PC-9 (cell line): ENCODE measurements at regions of chr16 and their contacts with region 1.

Region 1: DNA sequence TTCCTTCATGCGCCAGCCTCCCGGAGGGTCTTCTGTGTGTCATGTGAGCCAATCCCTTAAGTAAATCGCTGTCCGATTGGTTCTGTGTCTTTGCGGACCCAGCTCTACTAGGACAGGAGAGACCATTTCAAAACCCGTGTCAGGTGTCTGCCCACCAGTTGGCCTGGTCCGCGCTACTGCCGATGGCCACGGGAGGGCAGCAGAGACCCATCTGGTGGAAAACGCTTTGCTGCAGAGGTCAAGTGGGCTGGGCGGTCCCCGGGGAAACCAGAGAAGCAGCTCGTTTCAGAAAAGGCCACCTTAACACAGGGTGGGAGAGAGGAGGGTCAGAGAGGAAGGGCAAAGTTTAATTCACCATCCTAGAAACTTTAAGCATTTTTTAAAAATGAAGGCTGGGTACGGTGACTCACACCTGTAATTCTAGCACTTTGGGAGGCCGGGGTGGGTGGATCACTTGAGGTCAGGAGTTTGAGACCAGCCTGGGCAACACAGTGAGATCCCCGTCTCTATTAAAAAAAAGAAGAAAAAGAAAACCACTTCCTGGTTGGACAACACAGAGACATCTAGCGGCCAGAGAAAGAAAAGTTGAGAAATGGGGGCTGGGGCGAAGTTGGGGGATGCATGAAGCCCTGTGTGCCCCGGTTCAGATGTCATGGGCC is 2.8 kb upstream of the CIBAR2 start:
- DNase-seq: peak; percentile 67 to 93
- H3K4me3 ChIP-seq: no peak overlapping the region
- H3K27ac ChIP-seq: peak overlapping the region; percentile 29; the same call in 1 of the 2 replicates
- H3K4me1 ChIP-seq: no peaks in the 10 kb centered on the region
- H3K27me3 ChIP-seq: no peaks in the 10 kb centered on the region
- CTCF ChIP-seq: peak; percentile 97

Region 2: GRCh38 chr16:84774810-84775209 is 340.2 kb before region 1 on chr16:
- CTCF ChIA-PET with region 1: no interaction called
- POLR2A ChIA-PET with region 1: no interaction called
- intact Hi-C with region 1: no loop called
- DNase-seq: peak in 1 of 2 experiments; percentile 57
- H3K4me3 ChIP-seq: no peak overlapping the region
- H3K27ac ChIP-seq: no peak overlapping the region
- H3K4me1 ChIP-seq: no peaks in the 10 kb centered on the region
- H3K27me3 ChIP-seq: no peaks in the 10 kb centered on the region
- CTCF ChIP-seq: no peak

Region 3: GRCh38 chr16:85173981-85174751 is 59.1 kb after region 1 on chr16:
- CTCF ChIA-PET with region 1: interaction called, 4 read pairs
- POLR2A ChIA-PET with region 1: no interaction called
- intact Hi-C with region 1: loop called (anchors 2 kb)
- DNase-seq: peak; percentile 51 to 74
- H3K4me3 ChIP-seq: peak overlapping the region; percentile 12; the same call in 1 of the 2 replicates
- H3K27ac ChIP-seq: peak overlapping the region; percentile 50
- H3K4me1 ChIP-seq: peaks cover 44% of the 10 kb centered on the region
- H3K27me3 ChIP-seq: no peaks in the 10 kb centered on the region
- CTCF ChIP-seq: no peak

Region 4: GRCh38 chr16:85245307-85246172 is 130.5 kb after region 1 on chr16:
- CTCF ChIA-PET with region 1: no interaction called
- POLR2A ChIA-PET with region 1: no interaction called
- intact Hi-C with region 1: loop called (anchors 5 kb)
- DNase-seq: peak in 1 of 2 experiments; percentile 57
- H3K4me3 ChIP-seq: no peak overlapping the region
- H3K27ac ChIP-seq: no peak overlapping the region
- H3K4me1 ChIP-seq: no peaks in the 10 kb centered on the region
- H3K27me3 ChIP-seq: no peaks in the 10 kb centered on the region
- CTCF ChIP-seq: peak; percentile 86

Region 5: GRCh38 chr16:85291302-85292148 is 176.5 kb after region 1 on chr16:
- CTCF ChIA-PET with region 1: no interaction called
- POLR2A ChIA-PET with region 1: no interaction called
- intact Hi-C with region 1: no loop called
- DNase-seq: no peak
- H3K4me3 ChIP-seq: no peak overlapping the region
- H3K27ac ChIP-seq: no peak overlapping the region
- H3K4me1 ChIP-seq: no peaks in the 10 kb centered on the region
- H3K27me3 ChIP-seq: no peaks in the 10 kb centered on the region
- CTCF ChIP-seq: no peak

Region 6: GRCh38 chr16:85305996-85306792 is 191.2 kb after region 1 on chr16:
- CTCF ChIA-PET with region 1: interaction called, 5 read pairs
- POLR2A ChIA-PET with region 1: no interaction called
- intact Hi-C with region 1: loop called (anchors 5 kb)
- DNase-seq: peak; percentile 83 to 88
- H3K4me3 ChIP-seq: no peak overlapping the region
- H3K27ac ChIP-seq: no peak overlapping the region
- H3K4me1 ChIP-seq: peaks cover 10% of the 10 kb centered on the region
- H3K27me3 ChIP-seq: no peaks in the 10 kb centered on the region
- CTCF ChIP-seq: no peak

Region 7: DNA sequence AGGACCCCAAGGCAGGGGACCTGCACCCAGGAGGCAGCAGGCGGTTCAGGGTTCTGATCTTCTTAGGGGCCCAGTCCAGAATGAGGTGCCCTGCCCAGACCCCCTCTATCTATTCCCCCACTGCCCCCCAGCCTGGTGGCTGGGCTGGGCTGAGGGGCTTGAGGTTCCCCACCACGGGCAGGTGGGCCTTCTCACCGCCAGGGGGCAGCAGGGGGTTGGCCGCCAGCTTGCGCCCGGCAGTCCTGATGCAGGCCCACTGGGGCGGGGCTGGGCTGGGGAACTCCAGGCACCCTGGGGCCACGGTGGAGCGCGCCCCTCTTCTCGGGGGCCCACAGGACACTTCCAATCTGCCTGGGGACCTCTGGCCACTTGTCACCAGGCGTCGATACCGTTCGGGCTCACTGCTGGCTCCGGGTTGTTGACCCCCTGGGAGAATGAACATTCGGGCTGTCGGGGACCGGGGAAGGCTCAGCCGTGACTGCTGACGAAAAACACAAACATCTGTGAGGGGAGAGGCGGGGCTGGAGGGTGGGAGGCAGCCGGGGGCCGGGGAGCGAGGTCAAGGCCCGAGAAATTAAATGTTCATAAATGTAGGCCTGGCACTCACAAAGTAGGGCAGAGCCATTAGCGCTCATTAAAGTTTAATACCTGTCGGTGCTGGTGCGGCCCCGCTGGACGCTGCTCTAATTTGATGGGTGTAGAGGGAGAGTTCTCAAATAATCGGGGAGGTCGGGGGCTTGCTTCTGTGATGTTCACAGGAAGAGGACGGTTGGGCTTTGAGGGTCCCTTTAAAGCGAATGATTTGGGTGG is 278.8 kb after region 1 on chr16:
- CTCF ChIA-PET with region 1: no interaction called
- POLR2A ChIA-PET with region 1: no interaction called
- intact Hi-C with region 1: loop called (anchors 10 kb)
- DNase-seq: no peak
- H3K4me3 ChIP-seq: no peak overlapping the region
- H3K27ac ChIP-seq: no peak overlapping the region
- H3K4me1 ChIP-seq: peaks cover 36% of the 10 kb centered on the region
- H3K27me3 ChIP-seq: no peaks in the 10 kb centered on the region
- CTCF ChIP-seq: peak; percentile 66